Naive thymus-derived CD4-positive, alpha-beta T cell (primary cell): ENCODE measurements at regions of chr1 and their contacts with region 1.

Region 1: DNA sequence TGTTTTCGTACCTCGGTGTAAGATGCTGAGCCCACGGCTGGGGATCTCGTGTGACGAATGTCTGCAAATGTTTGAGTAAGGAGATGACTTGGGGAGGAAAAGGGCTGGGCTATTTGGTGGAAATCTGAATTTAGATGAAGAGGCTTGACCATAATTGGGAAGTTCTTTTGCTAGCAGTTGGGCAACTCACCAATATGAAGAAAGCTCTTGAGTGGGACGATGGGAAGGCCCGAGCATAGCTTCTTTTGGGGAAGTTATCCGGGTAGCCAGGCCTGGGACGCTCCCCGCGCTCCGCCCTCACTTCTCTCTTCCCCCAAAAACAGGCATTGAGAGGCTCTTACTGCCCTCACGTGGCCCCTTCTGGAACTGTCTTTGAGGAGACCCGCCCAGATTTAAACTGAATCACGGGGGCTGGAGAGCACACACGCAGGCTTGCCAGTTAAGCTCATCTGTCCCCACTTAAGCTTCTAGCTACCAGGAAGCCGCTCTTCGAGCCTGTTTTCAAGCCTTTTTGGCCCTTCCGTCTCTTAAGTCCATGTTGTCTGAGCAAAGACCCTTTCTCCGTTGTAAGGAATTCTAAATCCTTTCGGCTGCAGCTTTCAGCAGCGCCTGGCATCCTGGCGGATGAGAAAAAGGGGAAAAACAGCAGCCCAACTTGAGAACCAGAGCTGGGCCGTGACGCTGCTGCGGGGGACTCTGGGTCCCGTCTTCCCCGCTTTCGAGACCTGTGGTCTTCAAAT is 93.1 kb downstream of the NID1 start:
- DNase-seq: peak; percentile 71 to 87 (median 84)
- ATAC-seq: peak; percentile 98
- H3K4me3 ChIP-seq: peak overlapping the region; percentile 14
- H3K4me3 Mint-ChIP-seq: peak overlapping the region; percentile 67 to 82 (median 76)
- H3K27ac ChIP-seq: peak overlapping the region; percentile 59
- H3K27ac Mint-ChIP-seq: peak overlapping the region; percentile 87 to 95 (median 90)
- H3K4me1 ChIP-seq: peaks cover 9 to 14% of the 10 kb centered on the region in 2 donors
- H3K4me1 Mint-ChIP-seq: peaks cover 9 to 19% (median 13%) of the 10 kb centered on the region in 7 donors
- H3K27me3 ChIP-seq: no peaks in the 10 kb centered on the region
- H3K27me3 Mint-ChIP-seq: peaks cover 0 to 26% (median 0%) of the 10 kb centered on the region in 5 donors

Region 2: GRCh38 chr1:235100194-235100772 is 871.5 kb before region 1 on chr1:
- CTCF ChIA-PET with region 1: no interaction called
- POLR2A ChIA-PET with region 1: no interaction called
- intact Hi-C with region 1: loop called in 1 of 2 experiments (anchors 5 kb)
- DNase-seq: peak in 1 of 9 donors; percentile 4
- ATAC-seq: no peak
- H3K4me3 ChIP-seq: no peak overlapping the region
- H3K4me3 Mint-ChIP-seq: no peak overlapping the region
- H3K27ac ChIP-seq: no peak overlapping the region
- H3K27ac Mint-ChIP-seq: no peak overlapping the region
- H3K4me1 ChIP-seq: peaks cover 16 to 21% of the 10 kb centered on the region in 2 donors
- H3K4me1 Mint-ChIP-seq: peaks cover 20 to 38% (median 33%) of the 10 kb centered on the region in 7 donors
- H3K27me3 ChIP-seq: no peaks in the 10 kb centered on the region
- H3K27me3 Mint-ChIP-seq: peaks cover 0 to 5% (median 0%) of the 10 kb centered on the region in 5 donors

Region 3: GRCh38 chr1:235734335-235734734 is 237.4 kb before region 1 on chr1:
- CTCF ChIA-PET with region 1: interaction called, 6 read pairs
- POLR2A ChIA-PET with region 1: no interaction called
- intact Hi-C with region 1: loop called in 1 of 2 experiments (anchors 5 kb)
- DNase-seq: no peak
- ATAC-seq: no peak
- H3K4me3 ChIP-seq: no peak overlapping the region
- H3K4me3 Mint-ChIP-seq: no peak overlapping the region
- H3K27ac ChIP-seq: no peak overlapping the region
- H3K27ac Mint-ChIP-seq: no peak overlapping the region
- H3K4me1 ChIP-seq: no peaks in the 10 kb centered on the region
- H3K4me1 Mint-ChIP-seq: peaks cover 0 to 6% (median 0%) of the 10 kb centered on the region in 7 donors
- H3K27me3 ChIP-seq: no peaks in the 10 kb centered on the region
- H3K27me3 Mint-ChIP-seq: no peaks in the 10 kb centered on the region

Region 4: DNA sequence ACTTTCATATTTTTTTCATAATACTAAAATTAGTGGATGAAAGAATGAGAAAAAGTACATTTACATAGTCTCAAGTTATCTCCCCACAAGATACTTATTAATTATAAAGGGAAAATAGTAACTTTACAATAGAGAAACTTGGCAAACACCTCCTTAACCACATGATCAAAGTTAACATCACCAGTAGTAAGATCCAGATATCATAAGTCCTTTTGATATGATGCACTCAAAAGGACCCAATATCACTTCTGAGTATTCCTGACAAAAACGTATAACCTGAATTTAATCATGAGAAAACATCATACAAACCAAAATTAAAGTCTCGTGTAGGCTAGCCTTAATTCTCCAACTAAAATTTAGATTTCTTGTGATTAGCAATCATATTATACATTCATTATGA is 172.5 kb before region 1 on chr1:
- CTCF ChIA-PET with region 1: no interaction called
- POLR2A ChIA-PET with region 1: no interaction called
- intact Hi-C with region 1: loop called in 1 of 2 experiments (anchors 5 kb)
- DNase-seq: no peak
- ATAC-seq: no peak
- H3K4me3 ChIP-seq: no peak overlapping the region
- H3K4me3 Mint-ChIP-seq: no peak overlapping the region
- H3K27ac ChIP-seq: no peak overlapping the region
- H3K27ac Mint-ChIP-seq: no peak overlapping the region
- H3K4me1 ChIP-seq: no peaks in the 10 kb centered on the region
- H3K4me1 Mint-ChIP-seq: peaks cover 0 to 3% (median 0%) of the 10 kb centered on the region in 7 donors
- H3K27me3 ChIP-seq: no peaks in the 10 kb centered on the region
- H3K27me3 Mint-ChIP-seq: no peaks in the 10 kb centered on the region

Region 5: GRCh38 chr1:235923466-235924021 is 48.2 kb before region 1 on chr1:
- CTCF ChIA-PET with region 1: interaction called, 6 read pairs
- POLR2A ChIA-PET with region 1: no interaction called
- intact Hi-C with region 1: loop called in 1 of 2 experiments (anchors 5 kb)
- DNase-seq: peak in 5 of 9 donors; percentile 8 to 40 (median 26)
- ATAC-seq: peak; percentile 63
- H3K4me3 ChIP-seq: no peak overlapping the region
- H3K4me3 Mint-ChIP-seq: peak overlapping the region in 8 of 10 donors; percentile 6 to 69 (median 54)
- H3K27ac ChIP-seq: no peak overlapping the region
- H3K27ac Mint-ChIP-seq: peak overlapping the region; percentile 20 to 88 (median 55)
- H3K4me1 ChIP-seq: peaks cover 12 to 19% of the 10 kb centered on the region in 2 donors
- H3K4me1 Mint-ChIP-seq: peaks cover 18 to 41% (median 26%) of the 10 kb centered on the region in 7 donors
- H3K27me3 ChIP-seq: no peaks in the 10 kb centered on the region
- H3K27me3 Mint-ChIP-seq: peaks cover 0 to 12% (median 0%) of the 10 kb centered on the region in 5 donors

Region 6: DNA sequence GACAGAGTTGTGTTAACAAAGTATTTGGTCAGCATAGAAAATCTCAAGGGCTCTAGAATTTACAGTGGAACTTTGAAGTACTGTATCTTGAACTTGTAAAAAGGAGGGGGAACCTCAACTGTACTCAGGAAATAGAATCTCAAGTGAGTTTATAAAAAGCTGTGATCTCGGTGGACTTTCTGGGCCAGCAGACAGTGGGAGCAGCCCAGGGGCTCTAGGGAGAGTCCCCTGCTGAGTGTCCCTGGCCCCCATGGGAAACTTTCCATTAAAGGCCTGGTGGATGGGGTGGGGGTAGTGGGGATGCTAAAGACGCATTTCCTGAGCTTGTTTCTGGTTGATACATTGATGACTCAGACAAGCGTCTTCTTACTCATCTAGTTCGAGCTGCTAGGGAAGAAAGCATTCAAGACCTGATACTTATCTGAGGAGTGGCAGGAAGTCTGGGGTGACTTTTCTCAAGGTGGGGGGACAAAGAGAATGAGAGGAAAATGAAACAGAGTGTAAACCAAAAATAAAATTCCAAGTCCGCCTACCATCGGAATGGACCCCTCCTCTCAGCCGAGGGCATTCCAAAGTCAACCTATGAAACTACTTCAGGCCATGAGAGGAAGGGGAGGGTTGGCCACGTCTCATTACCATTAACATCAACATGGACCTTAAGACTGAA is 27.7 kb after region 1 on chr1:
- CTCF ChIA-PET with region 1: interaction called, 4 read pairs
- POLR2A ChIA-PET with region 1: interaction called, 3 read pairs
- intact Hi-C with region 1: loop called (anchors 1 kb)
- DNase-seq: peak in 8 of 9 donors; percentile 7 to 75 (median 37)
- ATAC-seq: peak; percentile 90
- H3K4me3 ChIP-seq: no peak overlapping the region
- H3K4me3 Mint-ChIP-seq: peak overlapping the region in 9 of 10 donors; percentile 0 to 71 (median 55)
- H3K27ac ChIP-seq: peak overlapping the region; percentile 22
- H3K27ac Mint-ChIP-seq: peak overlapping the region; percentile 19 to 97 (median 80)
- H3K4me1 ChIP-seq: peaks cover 10 to 31% of the 10 kb centered on the region in 2 donors
- H3K4me1 Mint-ChIP-seq: peaks cover 10 to 71% (median 20%) of the 10 kb centered on the region in 7 donors
- H3K27me3 ChIP-seq: no peaks in the 10 kb centered on the region
- H3K27me3 Mint-ChIP-seq: no peaks in the 10 kb centered on the region

Region 7: DNA sequence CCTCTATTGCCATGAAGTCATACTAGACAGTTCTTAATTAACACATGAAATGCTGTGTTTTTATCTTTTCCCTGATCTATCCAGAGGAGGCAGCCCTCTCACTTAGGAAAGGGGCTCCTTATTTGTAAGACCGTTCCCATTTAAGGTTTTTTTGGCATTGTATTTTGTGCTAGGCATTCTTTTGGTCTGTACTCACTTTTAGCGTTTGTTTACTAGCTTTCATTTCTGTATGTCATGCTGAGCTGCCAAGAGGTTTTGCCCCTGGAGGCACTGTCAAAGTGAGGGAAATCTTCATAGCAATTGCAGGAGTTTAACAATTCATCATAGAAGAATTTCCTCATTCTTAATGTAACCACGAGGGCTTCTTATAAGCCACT is 882.8 kb after region 1 on chr1:
- CTCF ChIA-PET with region 1: no interaction called
- POLR2A ChIA-PET with region 1: no interaction called
- intact Hi-C with region 1: no loop called
- DNase-seq: no peak
- ATAC-seq: no peak
- H3K4me3 ChIP-seq: no peak overlapping the region
- H3K4me3 Mint-ChIP-seq: no peak overlapping the region
- H3K27ac ChIP-seq: no peak overlapping the region
- H3K27ac Mint-ChIP-seq: no peak overlapping the region
- H3K4me1 ChIP-seq: no peaks in the 10 kb centered on the region
- H3K4me1 Mint-ChIP-seq: peaks cover 0 to 21% (median 9%) of the 10 kb centered on the region in 7 donors
- H3K27me3 ChIP-seq: peaks cover 0 to 2% of the 10 kb centered on the region in 2 donors
- H3K27me3 Mint-ChIP-seq: no peaks in the 10 kb centered on the region